PC-3 (cell line): ENCODE measurements at regions of chr1 and their contacts with region 1.

Region 1: DNA sequence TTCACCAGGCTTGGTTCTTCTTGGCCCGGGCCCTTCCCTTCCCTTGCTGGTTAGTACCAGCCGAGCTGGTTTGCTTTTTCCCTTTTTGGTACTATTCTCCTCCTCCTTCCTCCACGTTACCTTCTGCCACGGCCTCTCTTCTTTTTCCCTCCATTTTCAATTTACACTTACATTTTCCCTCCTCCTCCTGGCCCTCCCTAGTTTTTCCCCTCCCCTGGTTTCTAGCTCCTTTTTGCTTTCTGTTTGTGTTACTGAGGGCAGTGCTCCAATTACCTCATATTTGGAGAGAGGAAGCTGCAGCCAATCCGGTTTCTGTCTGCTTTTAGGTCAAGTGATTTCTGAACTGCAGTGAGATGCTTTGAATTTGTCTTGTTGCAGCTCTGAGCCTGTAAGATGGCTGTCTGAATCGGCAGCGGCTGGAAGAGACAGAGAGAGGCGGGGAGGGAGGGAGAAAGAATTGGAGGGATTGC is 63.7 kb downstream of the MACF1 start:
- DNase-seq: no peak
- ATAC-seq: no peak
- H3K4me3 ChIP-seq: no peak overlapping the region
- H3K27ac ChIP-seq: no peak overlapping the region
- H3K4me1 ChIP-seq: no peaks in the 10 kb centered on the region
- H3K27me3 ChIP-seq: no peaks in the 10 kb centered on the region
- CTCF ChIP-seq: no peak

Region 2: GRCh38 chr1:39220891-39221870 is 47.0 kb before region 1 on chr1:
- CTCF ChIA-PET with region 1: no interaction called
- POLR2A ChIA-PET with region 1: no interaction called
- intact Hi-C with region 1: no loop called
- DNase-seq: peak; percentile 81
- ATAC-seq: peak; percentile 51
- H3K4me3 ChIP-seq: 0 out of 2 replicates have a peak overlapping the region, but pooled peaks have one; percentile 5
- H3K27ac ChIP-seq: peak overlapping the region; percentile 8
- H3K4me1 ChIP-seq: peaks cover 15% of the 10 kb centered on the region
- H3K27me3 ChIP-seq: no peaks in the 10 kb centered on the region
- CTCF ChIP-seq: no peak

Region 3: GRCh38 chr1:39398278-39399021 is 130.3 kb after region 1 on chr1:
- CTCF ChIA-PET with region 1: no interaction called
- POLR2A ChIA-PET with region 1: no interaction called
- intact Hi-C with region 1: loop called (anchors 5 kb)
- DNase-seq: peak; percentile 96
- ATAC-seq: peak; percentile 93
- H3K4me3 ChIP-seq: peak overlapping the region; percentile 5; the same call in 1 of the 2 replicates
- H3K27ac ChIP-seq: peak overlapping the region; percentile 75
- H3K4me1 ChIP-seq: peaks cover 53% of the 10 kb centered on the region
- H3K27me3 ChIP-seq: no peaks in the 10 kb centered on the region
- CTCF ChIP-seq: no peak

Region 4: GRCh38 chr1:39538588-39539465 is 270.7 kb after region 1 on chr1:
- CTCF ChIA-PET with region 1: no interaction called
- POLR2A ChIA-PET with region 1: no interaction called
- intact Hi-C with region 1: loop called (anchors 10 kb)
- DNase-seq: peak; percentile 72
- ATAC-seq: peak; percentile 99
- H3K4me3 ChIP-seq: no peak overlapping the region
- H3K27ac ChIP-seq: no peak overlapping the region
- H3K4me1 ChIP-seq: no peaks in the 10 kb centered on the region
- H3K27me3 ChIP-seq: no peaks in the 10 kb centered on the region
- CTCF ChIP-seq: peak; percentile 94